ENCODE measurements at regions of chr2 and their contacts with region 1.

Region 1: GRCh38 chr2:8681786-8682692 is at the start of gene ID2:
- DNase-seq: peak; percentile 99 to 100
- ATAC-seq: peak; percentile 75 to 88 (median 77)
- H3K4me3 ChIP-seq: peak within 1 kb of the TSS; percentile 80
- H3K4me3 Mint-ChIP-seq: peak within 1 kb of the TSS; percentile 99
- H3K27ac ChIP-seq: peak within 1 kb of the TSS; percentile 48
- H3K27ac Mint-ChIP-seq: peak within 1 kb of the TSS; percentile 97 to 98
- H3K4me1 ChIP-seq: peaks cover 37% of the 10 kb centered on the region
- H3K4me1 Mint-ChIP-seq: peaks cover 59 to 69% of the 10 kb centered on the region in 2 donors
- H3K27me3 ChIP-seq: peaks cover 6% of the 10 kb centered on the region
- H3K27me3 Mint-ChIP-seq: peaks cover 0 to 8% of the 10 kb centered on the region in 2 donors
- CTCF ChIP-seq: no peak
- total RNA-seq, gene ID2: 185 to 209 (median 191) TPM

Region 2: GRCh38 chr2:7748717-7749415 is 933.2 kb before region 1 on chr2:
- intact Hi-C with region 1: loop called (anchors 5 kb)
- DNase-seq: peak in 1 of 2 donors; percentile 69
- ATAC-seq: peak; percentile 50 to 61 (median 53)
- H3K4me3 ChIP-seq: no peak overlapping the region
- H3K4me3 Mint-ChIP-seq: peak overlapping the region; percentile 67
- H3K27ac ChIP-seq: peak overlapping the region; percentile 85
- H3K27ac Mint-ChIP-seq: peak overlapping the region; percentile 44 to 79
- H3K4me1 ChIP-seq: peaks cover 38% of the 10 kb centered on the region
- H3K4me1 Mint-ChIP-seq: peaks cover 37 to 42% of the 10 kb centered on the region in 2 donors
- H3K27me3 ChIP-seq: no peaks in the 10 kb centered on the region
- H3K27me3 Mint-ChIP-seq: no peaks in the 10 kb centered on the region
- CTCF ChIP-seq: no peak

Region 3: GRCh38 chr2:8169443-8169842 is 512.6 kb before region 1 on chr2:
- intact Hi-C with region 1: loop called (anchors 5 kb)
- DNase-seq: no peak
- ATAC-seq: no peak
- H3K4me3 ChIP-seq: no peak overlapping the region
- H3K4me3 Mint-ChIP-seq: no peak overlapping the region
- H3K27ac ChIP-seq: no peak overlapping the region
- H3K27ac Mint-ChIP-seq: peak overlapping the region; percentile 78 to 85
- H3K4me1 ChIP-seq: peaks cover 16% of the 10 kb centered on the region
- H3K4me1 Mint-ChIP-seq: peaks cover 50 to 51% of the 10 kb centered on the region in 2 donors
- H3K27me3 ChIP-seq: no peaks in the 10 kb centered on the region
- H3K27me3 Mint-ChIP-seq: no peaks in the 10 kb centered on the region
- CTCF ChIP-seq: no peak

Region 4: GRCh38 chr2:8488001-8488738 is 193.9 kb before region 1 on chr2:
- intact Hi-C with region 1: loop called (anchors 2 kb)
- DNase-seq: peak; percentile 71 to 93
- ATAC-seq: peak; percentile 81 to 91 (median 91)
- H3K4me3 ChIP-seq: peak overlapping the region; percentile 30
- H3K4me3 Mint-ChIP-seq: peak overlapping the region; percentile 98
- H3K27ac ChIP-seq: peak overlapping the region; percentile 95
- H3K27ac Mint-ChIP-seq: peak overlapping the region; percentile 97 to 100
- H3K4me1 ChIP-seq: peaks cover 59% of the 10 kb centered on the region
- H3K4me1 Mint-ChIP-seq: peaks cover 68 to 69% of the 10 kb centered on the region in 2 donors
- H3K27me3 ChIP-seq: no peaks in the 10 kb centered on the region
- H3K27me3 Mint-ChIP-seq: no peaks in the 10 kb centered on the region
- CTCF ChIP-seq: no peak

Region 5: DNA sequence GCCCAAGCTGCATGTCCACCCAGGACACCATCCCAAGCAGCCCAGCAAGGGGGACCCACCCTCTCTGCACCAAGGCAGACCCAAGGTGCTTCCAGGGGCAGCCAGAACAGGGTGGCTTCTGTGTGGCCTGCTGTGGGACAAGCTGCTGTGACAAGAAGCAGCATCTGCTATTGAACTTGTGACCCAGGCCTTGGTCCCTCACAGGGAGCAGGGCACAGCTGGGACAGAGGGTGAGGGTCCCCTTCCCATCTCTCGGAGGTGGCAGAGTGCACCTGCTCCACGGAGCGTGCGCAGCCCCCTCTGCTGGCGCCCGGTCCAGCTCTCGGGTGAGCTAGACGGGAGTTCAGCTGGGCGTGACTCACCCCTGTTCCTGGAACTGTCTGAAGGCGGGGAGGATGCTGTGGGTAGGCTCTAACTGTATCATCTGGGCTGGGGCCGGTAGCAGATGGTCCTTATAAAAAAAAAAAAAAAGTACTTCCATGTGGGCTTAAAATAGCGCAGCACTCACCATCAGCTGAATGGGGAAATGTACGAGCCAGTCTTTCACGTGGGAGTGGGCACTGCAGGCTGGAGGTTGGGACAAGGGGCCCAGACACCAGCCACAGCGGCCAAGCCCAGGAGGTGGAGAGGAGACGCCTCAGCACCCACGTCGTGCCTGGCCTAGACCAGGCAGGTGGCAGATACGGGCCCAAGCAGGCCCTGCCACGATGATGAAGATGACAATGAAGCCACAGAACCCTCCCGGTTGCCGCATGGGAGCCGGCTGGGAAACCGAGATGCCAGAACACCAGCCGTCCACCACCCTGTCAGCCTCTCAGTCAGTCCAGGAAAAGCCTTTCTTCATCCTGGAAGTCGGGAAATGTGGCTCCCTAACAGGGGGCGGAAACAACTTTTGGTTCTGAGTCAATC is 137.0 kb before region 1 on chr2:
- intact Hi-C with region 1: loop called (anchors 5 kb)
- DNase-seq: peak; percentile 71 to 88
- ATAC-seq: peak; percentile 67 to 78 (median 69)
- H3K4me3 ChIP-seq: no peak overlapping the region
- H3K4me3 Mint-ChIP-seq: peak overlapping the region; percentile 50
- H3K27ac ChIP-seq: peak overlapping the region; percentile 87
- H3K27ac Mint-ChIP-seq: peak overlapping the region; percentile 99
- H3K4me1 ChIP-seq: peaks cover 74% of the 10 kb centered on the region
- H3K4me1 Mint-ChIP-seq: peaks cover 73 to 82% of the 10 kb centered on the region in 2 donors
- H3K27me3 ChIP-seq: no peaks in the 10 kb centered on the region
- H3K27me3 Mint-ChIP-seq: no peaks in the 10 kb centered on the region
- CTCF ChIP-seq: peak; percentile 45

Measured in natural killer cell (primary cell).